ENCODE measurements at regions of chr19 and their contacts with region 1.

Region 1: GRCh38 chr19:19821366-19821951 is at the start of gene ZNF506:
- DNase-seq: peak; percentile 99
- H3K4me3 Mint-ChIP-seq: peak within 1 kb of the TSS; percentile 97
- H3K27ac Mint-ChIP-seq: peak within 1 kb of the TSS; percentile 97
- H3K4me1 Mint-ChIP-seq: peaks cover 39% of the 10 kb centered on the region
- H3K27me3 Mint-ChIP-seq: no peaks in the 10 kb centered on the region
- total RNA-seq, gene ZNF506: 32.9 to 39.3 TPM

Region 2: DNA sequence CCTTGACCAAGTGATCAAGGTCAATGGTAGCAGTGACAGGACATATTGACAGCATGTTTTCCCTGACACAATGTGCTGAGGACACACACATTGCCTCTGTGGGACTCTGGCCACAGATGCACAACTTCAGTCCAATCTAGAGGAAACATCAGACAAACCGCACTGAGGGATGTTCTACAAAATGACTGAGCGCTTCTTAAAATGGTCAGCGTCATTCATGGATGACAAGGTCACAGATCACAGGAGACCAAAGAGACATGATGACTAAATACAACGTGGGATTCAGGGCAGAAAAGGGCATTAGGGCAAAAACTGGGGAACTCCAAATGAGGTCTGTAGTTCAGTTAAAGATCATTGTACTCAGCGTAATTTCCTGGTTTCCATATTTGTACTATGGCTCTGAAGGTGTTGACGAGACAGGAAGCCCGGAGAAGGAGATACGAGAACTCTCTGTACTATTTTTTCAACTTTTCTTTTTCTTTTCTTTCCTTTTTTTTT is 223.6 kb before region 1 on chr19:
- CTCF ChIA-PET with region 1: no interaction called
- POLR2A ChIA-PET with region 1: no interaction called
- intact Hi-C with region 1: loop called (anchors 2 kb)
- DNase-seq: peak; percentile 74
- H3K4me3 Mint-ChIP-seq: peak overlapping the region; percentile 75
- H3K27ac Mint-ChIP-seq: peak overlapping the region; percentile 100
- H3K4me1 Mint-ChIP-seq: peaks cover 81% of the 10 kb centered on the region
- H3K27me3 Mint-ChIP-seq: no peaks in the 10 kb centered on the region

Region 3: GRCh38 chr19:19776041-19777008 is 45.1 kb before region 1 on chr19:
- CTCF ChIA-PET with region 1: interaction called, 3 read pairs
- POLR2A ChIA-PET with region 1: interaction called, 19 read pairs
- intact Hi-C with region 1: loop called (anchors 1 kb)
- DNase-seq: peak; percentile 96
- H3K4me3 Mint-ChIP-seq: peak overlapping the region; percentile 97
- H3K27ac Mint-ChIP-seq: peak overlapping the region; percentile 93
- H3K4me1 Mint-ChIP-seq: peaks cover 44% of the 10 kb centered on the region
- H3K27me3 Mint-ChIP-seq: no peaks in the 10 kb centered on the region

Region 4: DNA sequence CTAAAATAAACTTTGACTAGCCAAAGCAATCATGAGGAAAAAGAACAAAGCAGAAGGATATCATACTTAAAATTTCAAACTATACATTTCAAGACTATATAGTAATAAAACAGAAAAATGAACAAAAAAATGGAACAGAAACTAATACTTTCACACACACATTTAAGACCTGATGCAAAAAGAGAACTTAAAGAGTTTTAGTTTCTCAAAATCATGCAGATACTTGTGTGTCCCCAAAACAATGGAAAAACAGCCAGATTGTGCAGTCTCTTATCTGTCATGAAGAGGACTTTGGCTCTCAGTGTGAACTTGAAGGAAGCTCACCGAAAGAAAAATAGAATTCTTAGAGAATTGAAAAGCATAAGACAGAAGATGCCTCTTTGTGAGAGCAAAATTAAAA is 16.0 kb before region 1 on chr19:
- CTCF ChIA-PET with region 1: no interaction called
- POLR2A ChIA-PET with region 1: interaction called, 5 read pairs
- intact Hi-C with region 1: loop called (anchors 2 kb)
- DNase-seq: no peak
- H3K4me3 Mint-ChIP-seq: no peak overlapping the region
- H3K27ac Mint-ChIP-seq: peak overlapping the region; percentile 39
- H3K4me1 Mint-ChIP-seq: peaks cover 25% of the 10 kb centered on the region
- H3K27me3 Mint-ChIP-seq: no peaks in the 10 kb centered on the region

Region 5: DNA sequence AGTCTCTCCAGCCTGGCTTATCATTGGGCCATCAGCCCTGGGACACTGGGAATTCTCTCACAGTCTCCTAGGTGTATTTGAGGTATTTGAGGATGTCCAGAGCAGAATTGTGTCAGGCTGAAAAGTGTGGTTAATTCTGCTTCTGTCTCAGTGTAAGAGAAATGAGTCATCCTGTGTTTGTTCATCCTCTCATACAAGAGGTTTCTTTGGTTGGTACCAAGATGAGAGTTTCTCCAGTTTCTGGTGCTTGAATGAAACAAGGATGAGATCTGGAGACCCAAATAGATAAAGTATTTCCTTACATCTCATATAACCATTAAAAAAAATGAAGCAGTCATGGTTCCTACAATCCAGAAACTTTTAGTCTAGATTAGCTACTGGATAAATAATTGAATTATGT is 51.9 kb after region 1 on chr19:
- CTCF ChIA-PET with region 1: interaction called, 3 read pairs
- POLR2A ChIA-PET with region 1: interaction called, 49 read pairs
- intact Hi-C with region 1: loop called (anchors 2 kb)
- DNase-seq: no peak
- H3K4me3 Mint-ChIP-seq: no peak overlapping the region
- H3K27ac Mint-ChIP-seq: no peak overlapping the region
- H3K4me1 Mint-ChIP-seq: peaks cover 37% of the 10 kb centered on the region
- H3K27me3 Mint-ChIP-seq: no peaks in the 10 kb centered on the region

Region 6: DNA sequence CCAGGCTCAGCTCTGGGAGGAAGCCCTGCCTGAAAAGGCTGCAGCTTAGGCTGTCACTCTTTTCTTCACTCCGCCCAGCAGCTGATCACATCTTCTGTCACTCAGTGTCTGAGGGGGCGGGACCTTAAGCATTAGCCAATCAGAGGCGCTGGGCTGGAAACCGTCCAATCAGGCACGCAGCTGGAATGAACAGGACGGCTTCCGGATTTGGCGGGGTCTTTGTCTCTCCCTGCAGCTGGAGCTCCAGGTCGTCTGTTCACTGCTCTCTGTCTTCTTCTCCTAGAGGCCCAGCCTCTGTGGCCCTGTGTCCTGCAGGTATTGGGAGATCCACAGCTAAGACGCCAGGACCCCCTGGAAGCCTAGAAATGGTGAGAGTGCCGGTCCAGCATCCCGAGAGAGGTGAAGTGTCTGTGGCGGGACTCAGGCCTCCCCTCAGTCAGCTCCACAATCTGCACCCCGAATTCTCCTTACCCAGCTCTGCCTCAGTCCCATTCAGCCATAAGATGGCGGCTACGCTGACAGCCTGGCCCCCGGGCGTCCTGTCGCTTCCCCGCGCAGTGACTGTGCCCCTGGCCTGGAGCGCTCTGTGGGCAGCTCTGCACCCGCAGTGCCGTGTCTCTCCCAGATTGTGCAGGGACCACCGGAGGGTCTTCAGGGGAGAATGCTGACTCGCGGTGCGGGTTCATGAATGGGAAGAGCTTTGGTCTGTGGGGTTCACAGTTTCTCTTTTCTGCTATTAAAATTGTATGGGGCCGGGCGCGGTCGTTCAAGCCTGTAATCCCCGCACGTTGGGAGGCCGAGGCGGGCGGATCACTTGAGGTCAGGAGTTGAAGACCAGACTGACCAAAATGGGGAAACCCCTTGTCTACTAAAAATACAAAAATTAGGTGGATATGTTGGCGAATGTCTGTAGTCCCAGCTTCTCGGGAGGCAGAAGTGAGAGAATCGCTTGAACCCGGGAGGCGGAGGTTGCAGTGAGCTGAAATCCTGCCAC is 954.9 kb after region 1 on chr19 and contains the start of gene ZNF66:
- CTCF ChIA-PET with region 1: no interaction called
- POLR2A ChIA-PET with region 1: no interaction called
- intact Hi-C with region 1: loop called (anchors 5 kb)
- DNase-seq: peak; percentile 97
- H3K4me3 Mint-ChIP-seq: peak within 1 kb of the TSS; percentile 100
- H3K27ac Mint-ChIP-seq: peak within 1 kb of the TSS; percentile 97
- H3K4me1 Mint-ChIP-seq: peaks cover 16% of the 10 kb centered on the region
- H3K27me3 Mint-ChIP-seq: no peaks in the 10 kb centered on the region
- total RNA-seq, gene ZNF66: 5.0 to 6.0 TPM

Measured in activated CD4-positive, alpha-beta memory T cell treated with anti-CD3 and anti-CD28 coated beads for 36 hours (primary cell).